Endothelial cell of umbilical vein (primary cell): ENCODE measurements at regions of chr21 and their contacts with region 1.

Region 1: GRCh38 chr21:28745131-28746016 is 247.3 kb downstream of the LTN1 start:
- DNase-seq: peak; percentile 85
- H3K4me3 ChIP-seq: peak overlapping the region; percentile 38 to 75 (median 51)
- H3K27ac ChIP-seq: peak overlapping the region; percentile 68
- H3K4me1 ChIP-seq: peaks cover 7% of the 10 kb centered on the region
- H3K27me3 ChIP-seq: no peaks in the 10 kb centered on the region
- CTCF ChIP-seq: peak; percentile 77 to 78
- POLR2A ChIP-seq: no peak

Region 2: DNA sequence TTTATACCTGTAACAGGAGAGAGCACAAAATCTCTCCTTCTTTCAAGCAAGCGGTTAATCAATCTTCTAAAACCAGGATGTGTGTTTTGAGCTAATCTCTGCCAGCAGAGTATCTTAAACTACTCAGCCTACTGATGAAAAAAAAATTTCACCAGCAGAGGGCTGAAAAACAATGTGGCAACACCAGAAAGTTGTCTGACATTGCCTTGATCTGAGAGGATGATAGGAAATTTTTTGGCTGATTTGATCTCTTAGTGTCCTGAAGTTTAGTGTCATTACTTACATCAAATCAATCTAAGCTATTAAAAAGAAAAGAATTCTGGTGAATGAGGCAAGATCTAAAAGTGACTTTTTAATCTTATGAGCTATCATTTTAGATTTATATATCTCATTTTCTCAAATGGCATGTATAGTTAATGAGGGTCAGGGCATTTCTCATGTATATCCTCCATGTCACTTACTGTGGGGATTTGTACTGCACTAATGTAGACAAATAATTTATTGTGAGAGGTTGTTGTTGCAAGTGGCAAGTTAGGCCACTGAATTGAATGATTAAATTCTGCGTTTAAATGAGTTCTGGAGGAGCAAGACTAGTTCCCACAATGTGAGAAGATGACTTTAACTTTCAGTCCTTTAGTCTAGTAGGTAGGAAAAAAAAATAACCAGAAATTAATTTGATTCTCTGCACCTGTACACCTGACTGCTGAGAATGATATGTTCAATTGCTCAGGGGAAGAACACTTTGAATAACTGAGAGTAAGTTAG is 1911.0 kb before region 1 on chr21:
- CTCF ChIA-PET with region 1: interaction called, 17 read pairs
- POLR2A ChIA-PET with region 1: no interaction called
- dilution Hi-C with region 1: no loop called
- intact Hi-C with region 1: no loop called
- DNase-seq: no peak
- H3K4me3 ChIP-seq: no peak overlapping the region
- H3K27ac ChIP-seq: no peak overlapping the region
- H3K4me1 ChIP-seq: no peaks in the 10 kb centered on the region
- H3K27me3 ChIP-seq: peaks cover 3 to 8% of the 10 kb centered on the region in 2 experiments
- CTCF ChIP-seq: peak in 1 of 2 donors; percentile 7
- POLR2A ChIP-seq: no peak

Region 3: GRCh38 chr21:27564684-27565301 is 1180.6 kb before region 1 on chr21:
- CTCF ChIA-PET with region 1: interaction called, 28 read pairs
- POLR2A ChIA-PET with region 1: no interaction called
- dilution Hi-C with region 1: no loop called
- intact Hi-C with region 1: loop called (anchors 1 kb)
- DNase-seq: peak; percentile 68
- H3K4me3 ChIP-seq: no peak overlapping the region
- H3K27ac ChIP-seq: no peak overlapping the region
- H3K4me1 ChIP-seq: no peaks in the 10 kb centered on the region
- H3K27me3 ChIP-seq: no peaks in the 10 kb centered on the region
- CTCF ChIP-seq: peak; percentile 61 to 68
- POLR2A ChIP-seq: no peak

Region 4: DNA sequence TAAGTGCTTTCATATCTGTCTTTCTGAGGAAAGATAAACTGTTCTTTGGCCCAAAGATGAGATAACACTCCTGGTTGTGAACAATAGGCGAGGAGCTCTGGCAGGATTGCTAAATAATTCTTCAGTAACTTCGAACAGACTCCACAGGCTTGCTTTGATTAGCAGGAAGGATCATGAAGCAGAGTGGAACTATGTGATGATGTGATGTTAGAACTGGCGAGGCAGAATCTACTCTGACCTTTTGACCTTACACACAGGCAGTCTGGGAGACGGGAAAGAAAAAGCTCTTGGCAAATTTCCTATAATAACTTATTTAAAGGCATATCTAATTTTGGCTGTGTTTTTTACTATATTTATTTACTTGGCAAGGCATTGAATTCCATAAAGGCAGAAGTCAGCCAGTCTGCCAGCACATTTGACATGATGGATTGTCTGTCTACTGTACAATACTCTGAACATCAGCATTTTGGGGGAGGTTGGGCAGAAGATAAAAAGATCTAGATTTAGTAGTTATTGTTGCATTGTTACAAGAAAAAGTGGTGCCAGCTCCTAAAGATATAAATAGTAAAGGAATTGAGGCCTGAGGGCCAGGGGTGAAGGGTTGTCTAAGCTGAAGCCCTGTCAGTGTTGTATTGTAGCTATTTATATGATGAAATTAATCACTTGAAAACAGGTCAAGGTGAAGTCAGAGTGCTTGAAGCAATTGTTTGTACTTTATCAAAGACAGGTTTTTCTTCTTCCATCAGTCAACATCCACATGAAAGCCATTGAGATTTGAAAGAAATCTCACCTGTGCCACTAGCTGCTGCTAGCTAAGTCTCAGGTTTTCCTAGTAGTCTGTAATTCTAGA is 461.5 kb before region 1 on chr21:
- CTCF ChIA-PET with region 1: interaction called, 12 read pairs
- POLR2A ChIA-PET with region 1: no interaction called
- dilution Hi-C with region 1: no loop called
- intact Hi-C with region 1: loop called (anchors 5 kb)
- DNase-seq: peak; percentile 97
- H3K4me3 ChIP-seq: peak overlapping the region in 1 of 3 experiments; percentile 17
- H3K27ac ChIP-seq: peak overlapping the region; percentile 79
- H3K4me1 ChIP-seq: peaks cover 21% of the 10 kb centered on the region
- H3K27me3 ChIP-seq: no peaks in the 10 kb centered on the region
- CTCF ChIP-seq: no peak
- POLR2A ChIP-seq: no peak

Region 5: DNA sequence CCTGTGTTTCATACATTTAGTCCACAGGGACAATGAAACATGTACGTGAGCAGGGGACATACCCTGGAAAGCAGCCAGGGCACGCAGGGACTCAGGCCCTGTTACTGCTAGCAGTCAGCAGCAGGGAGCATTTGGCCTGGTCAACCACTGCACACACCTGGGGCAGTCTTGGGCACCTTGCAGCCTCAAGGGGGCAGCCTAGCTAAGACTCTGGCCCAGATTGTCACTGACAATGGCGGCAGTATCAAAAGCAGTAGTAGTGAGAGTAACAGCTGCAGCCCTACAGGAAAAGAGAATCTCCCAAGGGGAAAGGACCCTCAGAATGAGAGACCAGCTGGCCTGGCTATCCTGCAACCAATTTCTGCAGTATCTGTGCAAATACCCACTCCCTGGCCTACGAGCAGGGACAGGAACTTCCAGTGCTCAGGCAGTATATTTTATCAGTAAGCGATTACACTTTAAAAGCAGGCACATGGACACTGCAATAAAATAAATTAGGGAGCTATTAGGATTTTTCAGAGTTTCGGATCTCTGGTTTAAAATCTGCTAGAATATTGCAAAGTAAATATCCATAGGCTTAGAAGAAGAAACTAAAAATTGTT is 228.3 kb before region 1 on chr21:
- CTCF ChIA-PET with region 1: interaction called, 75 read pairs
- POLR2A ChIA-PET with region 1: no interaction called
- dilution Hi-C with region 1: no loop called
- intact Hi-C with region 1: loop called (anchors 1 kb)
- DNase-seq: peak; percentile 32
- H3K4me3 ChIP-seq: no peak overlapping the region
- H3K27ac ChIP-seq: no peak overlapping the region
- H3K4me1 ChIP-seq: peaks cover 28% of the 10 kb centered on the region
- H3K27me3 ChIP-seq: no peaks in the 10 kb centered on the region
- CTCF ChIP-seq: peak; percentile 57 to 63
- POLR2A ChIP-seq: no peak

Region 6: DNA sequence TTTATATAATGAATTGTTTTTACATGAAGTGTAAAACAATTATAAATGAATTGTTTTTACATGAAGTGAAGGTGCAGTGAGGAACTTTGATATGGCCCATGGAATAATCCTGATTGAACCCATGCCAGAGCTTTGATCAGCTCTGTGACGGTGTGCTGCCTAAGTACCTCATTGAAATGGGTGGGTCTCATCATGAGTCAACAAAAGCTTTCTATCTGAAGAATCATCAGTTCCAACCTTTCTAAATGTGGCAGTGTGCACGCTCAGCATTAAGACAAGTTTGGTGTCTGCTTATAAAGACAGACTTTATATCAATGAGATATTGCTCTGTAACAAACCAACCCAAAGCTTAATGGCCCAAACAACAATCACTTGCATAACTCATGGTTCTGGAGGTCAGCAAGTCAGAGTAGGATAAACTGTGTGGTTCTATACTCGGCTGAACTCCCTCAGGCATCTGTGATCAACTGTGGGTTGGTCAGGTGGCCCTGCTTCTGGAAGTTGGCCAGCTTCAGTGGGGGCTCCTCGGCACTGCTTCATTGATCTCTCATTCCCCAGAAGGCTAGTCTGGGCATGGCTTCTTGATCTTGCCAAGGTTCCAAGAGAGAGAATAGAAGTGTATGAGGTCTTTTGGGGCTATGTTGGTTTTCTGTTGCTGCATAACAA is 10.7 kb before region 1 on chr21:
- CTCF ChIA-PET with region 1: interaction called, 17 read pairs
- POLR2A ChIA-PET with region 1: no interaction called
- dilution Hi-C with region 1: no loop called
- intact Hi-C with region 1: no loop called
- DNase-seq: no peak
- H3K4me3 ChIP-seq: no peak overlapping the region
- H3K27ac ChIP-seq: no peak overlapping the region
- H3K4me1 ChIP-seq: peaks cover 6% of the 10 kb centered on the region
- H3K27me3 ChIP-seq: no peaks in the 10 kb centered on the region
- CTCF ChIP-seq: no peak
- POLR2A ChIP-seq: no peak

Region 7: GRCh38 chr21:28822486-28823335 is 77.3 kb after region 1 on chr21:
- CTCF ChIA-PET with region 1: no interaction called
- POLR2A ChIA-PET with region 1: no interaction called
- dilution Hi-C with region 1: no loop called
- intact Hi-C with region 1: no loop called
- DNase-seq: peak; percentile 70
- H3K4me3 ChIP-seq: no peak overlapping the region
- H3K27ac ChIP-seq: peak overlapping the region; percentile 61
- H3K4me1 ChIP-seq: peaks cover 19% of the 10 kb centered on the region
- H3K27me3 ChIP-seq: no peaks in the 10 kb centered on the region
- CTCF ChIP-seq: no peak
- POLR2A ChIP-seq: no peak